ENCODE measurements at regions of chr4 and their contacts with region 1.

Region 1: GRCh38 chr4:24244663-24245490 is 339.5 kb downstream of the DHX15 start:
- DNase-seq: peak; percentile 70 to 83
- ATAC-seq: peak; percentile 90 to 92
- H3K4me3 ChIP-seq: no peak overlapping the region
- H3K27ac ChIP-seq: peak overlapping the region; percentile 83 to 90 (median 86)
- H3K4me1 ChIP-seq: peaks cover 40 to 44% of the 10 kb centered on the region in 2 donors
- H3K27me3 ChIP-seq: no peaks in the 10 kb centered on the region
- CTCF ChIP-seq: no peak
- POLR2A ChIP-seq: peak in 1 of 2 donors; percentile 23

Region 2: DNA sequence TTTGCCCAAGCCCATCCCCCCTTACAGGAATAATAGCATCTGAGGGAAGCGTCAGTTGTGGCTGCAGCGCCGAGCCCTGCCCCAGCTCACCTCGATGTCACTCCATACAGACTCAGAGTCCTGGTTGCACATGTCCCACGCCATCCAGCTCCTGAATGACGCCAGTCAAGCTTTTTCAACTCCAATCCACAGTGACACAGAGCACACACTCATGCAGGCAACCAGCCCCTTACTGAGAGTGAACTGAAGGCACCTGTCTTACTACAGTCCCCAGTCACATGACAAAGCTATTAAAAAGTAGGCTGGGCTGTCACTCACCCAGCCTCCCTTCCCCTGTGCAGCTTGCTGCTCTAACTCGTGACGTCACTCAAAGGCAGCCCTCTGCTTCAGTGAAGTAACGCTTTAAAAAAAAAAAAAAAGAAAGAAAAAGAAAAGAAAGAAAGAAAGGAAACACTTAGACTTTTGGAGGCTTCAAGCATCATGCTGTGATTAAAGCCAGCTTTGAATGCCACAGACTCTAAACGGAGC is 355.0 kb before region 1 on chr4 and contains the start of gene PPARGC1A:
- in situ Hi-C with region 1: no loop called
- intact Hi-C with region 1: loop called (anchors 10 kb)
- DNase-seq: peak; percentile 86 to 94
- ATAC-seq: peak; percentile 80 to 84
- H3K4me3 ChIP-seq: peak within 1 kb of the TSS; percentile 65 to 77 (median 69)
- H3K27ac ChIP-seq: peak within 1 kb of the TSS; percentile 84 to 99 (median 90)
- H3K4me1 ChIP-seq: peaks cover 27 to 42% of the 10 kb centered on the region in 2 donors
- H3K27me3 ChIP-seq: no peaks in the 10 kb centered on the region
- CTCF ChIP-seq: no peak
- POLR2A ChIP-seq: peak; percentile 96 to 98
- total RNA-seq, gene PPARGC1A: 30.6 to 68.9 (median 52.3) TPM

Region 3: DNA sequence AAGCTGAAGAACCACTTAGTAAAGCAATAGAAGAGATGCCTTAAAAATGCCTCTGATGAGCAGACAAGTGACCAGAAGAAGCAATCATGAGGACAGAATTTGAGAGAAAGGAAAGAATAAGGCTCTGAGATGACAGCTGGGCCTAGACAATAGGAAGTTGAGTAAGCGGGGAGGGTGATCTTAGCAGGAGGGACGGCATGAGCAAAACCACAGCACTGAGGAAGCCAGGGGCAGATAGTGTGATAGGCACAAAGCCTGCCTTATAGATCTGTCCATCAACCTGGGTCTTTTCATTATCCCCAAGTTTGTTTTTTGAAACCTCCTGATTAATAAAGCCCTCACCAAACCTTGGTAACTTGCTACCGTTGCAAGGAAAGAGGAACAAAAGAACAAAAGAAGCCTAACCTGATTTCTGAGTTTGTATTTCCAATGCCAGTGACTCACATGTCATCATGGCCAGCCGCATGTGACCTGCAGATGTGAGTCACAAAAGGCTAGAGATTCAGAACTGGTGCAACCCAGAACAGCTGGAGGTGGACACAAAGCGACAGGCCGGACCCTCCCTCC is 299.3 kb before region 1 on chr4:
- in situ Hi-C with region 1: loop called in 1 of 4 experiments (anchors 10 kb)
- intact Hi-C with region 1: no loop called
- DNase-seq: peak; percentile 65 to 81
- ATAC-seq: peak; percentile 90 to 93
- H3K4me3 ChIP-seq: no peak overlapping the region
- H3K27ac ChIP-seq: peak overlapping the region; percentile 71 to 85 (median 78)
- H3K4me1 ChIP-seq: peaks cover 13 to 45% of the 10 kb centered on the region in 2 donors
- H3K27me3 ChIP-seq: no peaks in the 10 kb centered on the region
- CTCF ChIP-seq: no peak
- POLR2A ChIP-seq: peak; percentile 36 to 45

Region 4: DNA sequence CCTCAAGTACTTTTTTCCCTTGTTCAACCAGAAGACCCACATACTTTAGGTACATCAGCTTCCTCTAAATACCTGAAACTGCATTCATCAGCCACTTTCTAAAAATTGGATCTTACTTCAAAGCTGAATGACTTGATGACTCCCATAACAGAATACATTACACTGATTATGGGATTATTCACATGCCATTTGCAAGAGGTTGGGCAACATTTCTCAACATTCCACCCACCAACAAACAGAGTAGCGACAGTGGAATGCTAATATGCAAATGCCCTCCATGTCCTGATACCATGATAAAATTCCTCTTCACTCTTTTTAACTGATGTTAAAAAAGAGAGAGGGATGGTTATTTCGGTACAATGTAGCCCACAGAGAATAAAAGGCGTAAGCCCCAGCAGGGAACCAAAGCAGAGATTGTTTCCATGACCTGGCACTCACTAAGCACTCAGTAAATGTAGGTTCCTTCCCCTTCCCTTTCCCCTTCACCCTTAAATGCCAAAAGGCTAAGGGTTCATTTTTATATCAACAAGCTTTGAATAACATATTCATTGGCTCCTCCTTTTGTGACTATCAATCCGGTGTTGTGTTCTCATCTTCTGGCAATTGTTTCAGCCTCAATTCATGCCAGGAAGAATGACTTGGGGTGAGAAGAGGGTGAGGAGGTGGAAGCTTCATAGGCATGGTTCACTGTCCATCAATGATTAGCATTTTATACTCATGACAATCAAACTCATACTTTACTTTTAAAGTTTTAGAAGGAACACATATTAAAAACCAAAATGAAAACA is 22.3 kb after region 1 on chr4:
- in situ Hi-C with region 1: no loop called
- intact Hi-C with region 1: loop called (anchors 2 kb)
- DNase-seq: no peak
- ATAC-seq: no peak
- H3K4me3 ChIP-seq: no peak overlapping the region
- H3K27ac ChIP-seq: peak overlapping the region in 2 of 4 donors; percentile 79 to 83
- H3K4me1 ChIP-seq: peaks cover 18 to 36% of the 10 kb centered on the region in 2 donors
- H3K27me3 ChIP-seq: no peaks in the 10 kb centered on the region
- CTCF ChIP-seq: no peak
- POLR2A ChIP-seq: no peak

Region 5: GRCh38 chr4:25400699-25401399 is 1156.0 kb after region 1 on chr4:
- in situ Hi-C with region 1: no loop called
- intact Hi-C with region 1: no loop called
- DNase-seq: no peak
- ATAC-seq: no peak
- H3K4me3 ChIP-seq: no peak overlapping the region
- H3K27ac ChIP-seq: no peak overlapping the region
- H3K4me1 ChIP-seq: no peaks in the 10 kb centered on the region
- H3K27me3 ChIP-seq: no peaks in the 10 kb centered on the region
- CTCF ChIP-seq: no peak
- POLR2A ChIP-seq: no peak